ENCODE measurements at regions of chr7 and their contacts with region 1.

Region 1: DNA sequence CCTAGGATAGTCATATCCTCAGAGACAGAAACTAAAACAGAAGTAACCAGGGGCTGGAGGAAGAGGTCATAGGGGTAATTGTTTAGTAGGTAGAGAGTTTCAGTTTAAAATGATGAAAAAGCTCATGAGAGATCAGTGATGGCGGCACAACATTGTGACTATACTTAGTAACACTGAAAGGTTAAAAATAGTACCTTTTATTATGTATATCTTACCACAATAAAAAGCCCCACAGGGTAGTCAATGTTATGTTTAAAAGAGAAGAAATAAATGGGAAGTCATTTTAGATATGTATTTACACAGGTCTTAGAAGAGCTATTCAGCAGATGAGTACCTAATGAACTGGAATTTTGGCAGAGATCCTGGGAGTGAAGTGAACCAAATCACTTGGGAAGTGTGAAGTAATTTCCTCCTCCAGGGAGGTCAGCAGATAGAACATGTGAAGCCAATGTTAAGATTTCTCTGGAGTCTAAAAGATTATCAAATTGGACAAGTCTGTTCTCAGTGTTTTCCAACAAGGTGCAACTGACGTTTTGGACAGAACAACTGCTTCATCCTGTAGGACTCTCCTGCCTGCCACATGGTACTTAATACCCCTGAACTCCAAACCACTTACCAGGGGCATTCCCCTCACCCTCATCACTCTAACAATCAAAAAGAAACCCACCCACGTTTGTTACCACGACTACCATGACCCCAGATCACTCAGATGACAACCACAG is 6.4 kb downstream of the CDCA7L start:
- DNase-seq: peak; percentile 34
- H3K4me3 Mint-ChIP-seq: peak overlapping the region; percentile 32
- H3K27ac Mint-ChIP-seq: peak overlapping the region; percentile 92
- H3K4me1 Mint-ChIP-seq: peaks cover 67% of the 10 kb centered on the region
- H3K27me3 Mint-ChIP-seq: no peaks in the 10 kb centered on the region

Region 2: DNA sequence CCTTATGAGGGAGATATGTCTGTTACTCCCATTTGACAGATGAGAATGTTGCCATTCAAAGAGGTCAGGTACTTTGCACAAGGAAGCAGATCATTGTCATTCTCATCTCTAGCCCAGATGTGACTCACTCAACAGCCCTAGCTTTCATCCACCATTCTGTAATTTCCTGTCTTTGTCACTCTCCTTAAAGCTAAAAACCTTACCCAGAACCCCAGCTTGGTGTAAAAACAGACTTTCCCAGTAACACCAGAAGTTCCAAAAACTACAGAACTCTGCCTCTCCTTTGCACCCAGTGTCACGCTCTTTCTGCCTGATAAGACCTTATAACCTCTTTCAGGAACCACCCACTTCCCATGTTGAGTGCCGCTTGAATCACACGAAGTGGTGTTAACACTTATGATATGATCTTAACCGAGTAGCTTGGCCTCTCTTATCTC is 600.6 kb before region 1 on chr7:
- intact Hi-C with region 1: loop called (anchors 1 kb)
- DNase-seq: peak; percentile 57
- H3K4me3 Mint-ChIP-seq: peak overlapping the region; percentile 25
- H3K27ac Mint-ChIP-seq: peak overlapping the region; percentile 92
- H3K4me1 Mint-ChIP-seq: peaks cover 84% of the 10 kb centered on the region
- H3K27me3 Mint-ChIP-seq: no peaks in the 10 kb centered on the region

Region 3: DNA sequence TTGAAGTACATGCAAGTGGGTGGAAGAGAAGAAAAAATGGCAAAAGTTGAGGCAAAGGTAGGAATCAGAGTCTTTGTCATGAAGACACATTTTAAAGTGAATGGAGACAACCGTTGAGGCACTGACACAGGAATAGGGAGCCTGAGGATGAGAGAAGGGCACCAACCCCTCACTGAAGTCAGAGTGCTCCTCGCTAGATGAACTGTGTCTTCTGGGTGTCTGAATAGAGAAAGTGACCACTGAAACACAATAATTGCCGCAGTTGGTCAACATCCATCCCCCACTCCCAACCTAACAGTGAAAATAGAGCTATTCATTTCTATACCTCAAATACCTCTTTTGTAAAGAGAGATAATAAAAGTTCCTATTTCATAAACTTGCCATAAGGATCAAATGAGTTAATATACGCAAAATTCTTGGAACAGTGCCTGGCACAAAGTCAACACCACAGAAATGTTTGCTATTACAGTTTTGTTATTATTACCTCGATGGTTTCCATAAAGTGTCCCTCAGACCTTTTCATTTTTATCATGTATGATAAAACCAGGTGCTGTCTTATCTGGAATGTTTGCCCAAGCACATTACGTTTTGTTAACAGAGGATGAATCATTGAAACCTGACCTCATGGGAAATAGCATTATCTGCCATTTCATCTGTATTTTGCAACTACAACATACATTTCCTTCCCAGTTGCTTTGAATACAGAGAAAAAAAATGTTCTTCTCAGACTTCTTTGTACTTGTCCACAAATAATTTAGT is 573.3 kb before region 1 on chr7:
- intact Hi-C with region 1: loop called (anchors 2 kb)
- DNase-seq: no peak
- H3K4me3 Mint-ChIP-seq: peak overlapping the region; percentile 9
- H3K27ac Mint-ChIP-seq: peak overlapping the region; percentile 25
- H3K4me1 Mint-ChIP-seq: peaks cover 70% of the 10 kb centered on the region
- H3K27me3 Mint-ChIP-seq: no peaks in the 10 kb centered on the region

Region 4: DNA sequence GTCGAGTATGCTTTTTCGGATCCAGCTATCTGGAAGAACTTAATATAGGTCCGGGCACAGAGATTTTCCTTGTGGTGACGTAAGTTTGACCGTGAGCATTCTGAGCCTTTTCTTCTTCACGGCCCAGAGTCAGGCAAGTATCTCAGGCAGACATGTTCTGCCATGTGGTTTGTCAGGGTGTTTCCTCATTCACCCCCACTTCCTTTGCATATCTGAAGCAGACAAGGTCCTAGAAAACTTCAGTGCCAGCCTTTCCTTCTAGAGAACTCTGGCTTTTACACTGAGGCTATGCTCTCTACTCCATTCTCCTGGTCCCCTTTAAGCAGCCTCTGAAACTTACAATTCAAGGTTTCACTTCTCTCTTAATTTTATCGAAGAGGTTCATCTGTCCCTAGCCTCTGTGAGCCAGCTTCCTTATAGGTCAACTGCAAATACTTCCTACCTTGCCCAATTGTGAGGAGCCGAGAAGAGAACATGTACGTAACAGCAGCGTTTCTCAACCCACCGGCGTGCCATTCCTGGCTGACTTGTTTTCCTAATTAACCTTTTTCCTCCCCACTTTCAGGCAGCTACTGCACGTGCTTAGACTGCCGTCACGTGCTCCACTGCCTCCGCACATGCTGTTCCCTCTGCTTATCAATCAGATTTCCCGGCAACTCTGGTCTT is 40.9 kb before region 1 on chr7:
- intact Hi-C with region 1: loop called (anchors 1 kb)
- DNase-seq: peak; percentile 9
- H3K4me3 Mint-ChIP-seq: peak overlapping the region; percentile 73
- H3K27ac Mint-ChIP-seq: peak overlapping the region; percentile 88
- H3K4me1 Mint-ChIP-seq: peaks cover 22% of the 10 kb centered on the region
- H3K27me3 Mint-ChIP-seq: no peaks in the 10 kb centered on the region

Region 5: GRCh38 chr7:21908746-21909145 is 30.6 kb before region 1 on chr7:
- intact Hi-C with region 1: no loop called
- DNase-seq: no peak
- H3K4me3 Mint-ChIP-seq: no peak overlapping the region
- H3K27ac Mint-ChIP-seq: no peak overlapping the region
- H3K4me1 Mint-ChIP-seq: no peaks in the 10 kb centered on the region
- H3K27me3 Mint-ChIP-seq: no peaks in the 10 kb centered on the region

Region 6: GRCh38 chr7:22103255-22103969 is 164.1 kb after region 1 on chr7:
- intact Hi-C with region 1: no loop called
- DNase-seq: peak; percentile 48
- H3K4me3 Mint-ChIP-seq: no peak overlapping the region
- H3K27ac Mint-ChIP-seq: no peak overlapping the region
- H3K4me1 Mint-ChIP-seq: peaks cover 6% of the 10 kb centered on the region
- H3K27me3 Mint-ChIP-seq: peaks cover 9% of the 10 kb centered on the region

Region 7: DNA sequence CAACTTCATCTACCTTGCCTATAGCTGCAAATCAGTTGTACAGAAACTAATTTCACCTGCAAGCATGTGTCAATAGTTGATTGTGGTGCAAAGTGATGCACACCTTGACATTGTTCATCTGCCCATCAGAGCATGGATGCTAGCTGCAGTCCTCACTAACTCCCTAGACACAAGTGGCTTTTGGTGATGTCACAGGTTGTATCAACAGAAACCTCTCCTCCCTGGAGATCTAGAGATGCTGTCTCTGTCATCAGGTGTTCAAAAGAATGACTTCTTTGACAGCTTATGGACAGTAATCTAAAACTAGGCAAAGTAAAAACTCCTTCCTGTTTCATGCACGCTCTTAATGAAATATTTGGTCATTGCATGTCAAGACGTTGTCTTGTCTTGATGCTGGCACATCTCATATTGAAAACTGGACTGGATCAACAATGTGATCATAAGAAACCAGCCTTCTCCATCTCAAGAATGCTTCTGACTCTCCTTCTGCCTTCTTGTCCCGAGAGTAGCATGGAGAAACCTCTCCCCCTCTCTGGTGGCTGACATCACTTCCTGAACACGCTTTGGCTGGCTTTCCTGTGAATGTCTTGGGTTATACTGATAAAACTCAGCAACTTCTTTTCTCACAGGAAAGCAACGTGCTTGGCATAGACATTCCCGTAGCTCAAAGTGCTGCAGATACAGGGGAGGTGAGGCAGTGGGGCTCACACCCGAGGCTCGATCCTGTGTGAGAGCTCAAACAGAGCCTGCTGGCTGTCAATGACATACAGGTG is 182.6 kb after region 1 on chr7:
- intact Hi-C with region 1: no loop called
- DNase-seq: no peak
- H3K4me3 Mint-ChIP-seq: peak overlapping the region; percentile 3
- H3K27ac Mint-ChIP-seq: no peak overlapping the region
- H3K4me1 Mint-ChIP-seq: peaks cover 9% of the 10 kb centered on the region
- H3K27me3 Mint-ChIP-seq: peaks cover 6% of the 10 kb centered on the region

Region 8: DNA sequence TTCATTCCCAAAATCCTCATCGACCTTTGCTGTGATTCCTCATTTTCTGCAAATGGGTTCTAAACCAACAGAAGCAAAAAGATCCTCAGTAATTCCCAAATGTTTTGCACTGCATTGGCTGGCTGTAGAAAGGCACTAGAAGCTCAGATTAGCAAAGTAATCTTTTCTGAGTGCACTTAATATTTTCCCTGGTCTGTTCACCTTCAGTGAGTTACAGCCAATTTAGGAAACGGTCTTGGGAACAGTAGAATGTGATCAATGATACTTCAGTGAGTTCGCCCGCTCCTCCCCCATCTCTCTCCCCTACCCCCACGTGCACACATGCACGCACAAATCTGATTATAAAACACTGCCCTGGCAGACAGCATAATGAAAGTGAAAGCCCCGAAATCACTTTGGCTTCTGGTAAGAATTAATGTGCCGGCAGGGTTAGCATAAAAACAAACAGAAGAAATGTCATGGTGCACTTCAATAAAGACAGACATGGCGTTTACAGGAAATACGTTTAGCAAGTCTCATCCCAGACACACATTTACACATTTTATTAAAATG is 207.7 kb after region 1 on chr7:
- intact Hi-C with region 1: no loop called
- DNase-seq: no peak
- H3K4me3 Mint-ChIP-seq: no peak overlapping the region
- H3K27ac Mint-ChIP-seq: no peak overlapping the region
- H3K4me1 Mint-ChIP-seq: peaks cover 5% of the 10 kb centered on the region
- H3K27me3 Mint-ChIP-seq: peaks cover 6% of the 10 kb centered on the region

Region 9: DNA sequence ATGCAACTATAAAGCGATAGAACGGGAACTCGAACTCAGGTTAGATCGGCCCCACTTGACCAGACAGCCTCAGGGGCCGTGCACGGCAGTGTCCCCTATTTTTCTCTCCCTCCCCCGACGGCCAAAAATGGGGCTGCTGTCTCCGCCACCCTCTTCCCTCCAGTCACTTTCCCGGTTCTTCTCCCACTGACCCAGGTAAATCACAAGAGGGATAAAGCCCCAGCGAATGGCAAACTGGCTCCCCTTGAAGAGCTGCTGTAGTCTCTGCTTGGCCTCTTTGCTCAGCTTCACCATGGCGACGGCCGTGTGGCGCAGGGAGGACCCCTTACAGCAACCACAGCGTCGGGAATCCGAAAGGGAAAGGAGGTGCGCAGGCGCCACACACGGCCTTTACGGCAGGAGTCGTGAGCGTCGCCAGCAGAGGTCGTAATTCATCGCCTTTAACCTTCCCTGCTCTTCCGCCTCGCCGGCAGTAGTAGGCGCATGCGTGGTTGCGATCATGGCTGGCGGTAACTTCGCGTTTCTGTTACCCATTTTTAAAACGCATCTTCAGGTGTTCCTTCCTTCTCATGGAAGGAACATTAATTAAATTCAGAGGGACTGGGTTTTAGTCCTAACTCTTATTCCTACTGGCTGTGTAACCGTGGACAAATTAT is 883.3 kb after region 1 on chr7 and contains the start of gene TOMM7:
- intact Hi-C with region 1: loop called (anchors 5 kb)
- DNase-seq: peak; percentile 81
- H3K4me3 Mint-ChIP-seq: peak within 1 kb of the TSS; percentile 98
- H3K27ac Mint-ChIP-seq: peak within 1 kb of the TSS; percentile 93
- H3K4me1 Mint-ChIP-seq: peaks cover 41% of the 10 kb centered on the region
- H3K27me3 Mint-ChIP-seq: peaks cover 17% of the 10 kb centered on the region
- total RNA-seq, gene TOMM7: 187 and 225 TPM in 2 replicates